ENCODE measurements at regions of chr13 and their contacts with region 1.

Region 1: DNA sequence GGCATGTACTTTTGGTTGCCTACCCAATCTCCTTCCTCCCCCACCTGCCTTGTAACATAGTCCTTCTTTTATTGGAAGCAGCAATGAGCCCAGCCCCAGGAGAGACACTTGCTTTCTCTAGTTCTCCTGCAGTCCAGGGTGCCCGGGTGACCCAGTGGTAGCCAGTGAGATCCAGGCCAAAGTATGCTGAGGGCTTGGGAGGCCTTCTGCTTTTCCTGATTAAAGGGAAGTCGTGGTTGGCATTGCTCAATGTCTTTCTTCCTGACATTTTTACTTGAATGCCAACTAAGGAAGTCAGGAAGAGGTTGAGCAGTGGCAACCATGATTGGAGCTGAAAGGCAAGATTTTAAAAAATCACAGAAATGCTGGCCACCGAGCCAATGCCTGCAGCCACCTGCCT is 25.7 kb downstream of the CNMD start:
- DNase-seq: no peak
- H3K4me3 ChIP-seq: no peak overlapping the region
- H3K27ac ChIP-seq: no peak overlapping the region
- H3K4me1 ChIP-seq: peaks cover 0 to 4% (median 3%) of the 10 kb centered on the region in 4 experiments; a peak in 3 of 7 replicates
- H3K27me3 ChIP-seq: no peaks in the 10 kb centered on the region
- CTCF ChIP-seq: no peak
- EP300 ChIP-seq: no peak
- POLR2A ChIP-seq: no peak
- RAD21 ChIP-seq: no peak

Region 2: GRCh38 chr13:52665325-52665724 is 48.6 kb before region 1 on chr13:
- CTCF ChIA-PET with region 1: interaction called, 13 read pairs
- POLR2A ChIA-PET with region 1: no interaction called
- DNase-seq: no peak
- H3K4me3 ChIP-seq: no peak overlapping the region
- H3K27ac ChIP-seq: no peak overlapping the region
- H3K4me1 ChIP-seq: no peaks in the 10 kb centered on the region
- H3K27me3 ChIP-seq: no peaks in the 10 kb centered on the region
- CTCF ChIP-seq: peak in 2 of 3 experiments; percentile 23 to 37; a peak in 2 of 4 replicates
- EP300 ChIP-seq: no peak
- POLR2A ChIP-seq: no peak
- RAD21 ChIP-seq: peak in 1 of 2 experiments; percentile 54; a peak in 3 of 4 replicates

Region 3: DNA sequence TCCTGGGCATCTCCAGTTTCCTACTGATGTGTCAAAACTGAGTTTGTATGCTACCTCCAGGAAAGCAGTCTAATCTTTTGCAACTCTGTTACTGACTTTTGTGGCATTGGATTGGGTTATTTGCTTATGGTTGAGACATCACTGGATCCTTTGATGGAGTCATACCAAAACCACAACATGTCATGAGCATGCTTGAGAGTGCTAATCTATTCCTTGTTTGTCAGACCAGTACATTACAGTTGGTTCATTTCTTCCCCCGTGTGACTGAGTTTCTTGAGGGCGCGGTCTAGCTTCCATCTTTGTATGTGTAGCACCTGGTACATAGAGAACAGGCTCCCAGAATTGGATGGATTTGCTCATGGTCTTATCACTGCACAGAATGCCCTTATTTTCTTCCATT is 18.0 kb before region 1 on chr13:
- CTCF ChIA-PET with region 1: interaction called, 3 read pairs
- POLR2A ChIA-PET with region 1: interaction called, 28 read pairs
- DNase-seq: no peak
- H3K4me3 ChIP-seq: no peak overlapping the region
- H3K27ac ChIP-seq: no peak overlapping the region
- H3K4me1 ChIP-seq: no peaks in the 10 kb centered on the region
- H3K27me3 ChIP-seq: no peaks in the 10 kb centered on the region
- CTCF ChIP-seq: no peak
- EP300 ChIP-seq: no peak
- POLR2A ChIP-seq: no peak
- RAD21 ChIP-seq: no peak

Measured in H1 (cell line).